OCI-LY7 (cell line): ENCODE measurements at regions of chr1 and their contacts with region 1.

Region 1: GRCh38 chr1:112619520-112620376 is at the start of gene CAPZA1:
- DNase-seq: peak; percentile 92
- H3K4me3 ChIP-seq: peak within 1 kb of the TSS; percentile 86
- H3K27ac ChIP-seq: peak within 1 kb of the TSS; percentile 93
- H3K4me1 ChIP-seq: peaks cover 30% of the 10 kb centered on the region
- CTCF ChIP-seq: no peak
- total RNA-seq, gene CAPZA1: 234 and 274 TPM in 2 replicates

Region 2: GRCh38 chr1:112395821-112396652 is 223.7 kb before region 1 on chr1 and contains the start of gene CTTNBP2NL:
- CTCF ChIA-PET with region 1: no interaction called
- POLR2A ChIA-PET with region 1: interaction called, 5 read pairs
- intact Hi-C with region 1: loop called (anchors 1 kb)
- DNase-seq: peak; percentile 85
- H3K4me3 ChIP-seq: peak within 1 kb of the TSS; percentile 89
- H3K27ac ChIP-seq: no peak within 1 kb of the TSS
- H3K4me1 ChIP-seq: peaks cover 61% of the 10 kb centered on the region
- CTCF ChIP-seq: no peak
- total RNA-seq, gene CTTNBP2NL: 1.5 and 2.1 TPM in 2 replicates

Region 3: GRCh38 chr1:112674439-112674985 is 54.8 kb after region 1 on chr1 and contains the start of gene MOV10:
- CTCF ChIA-PET with region 1: no interaction called
- POLR2A ChIA-PET with region 1: interaction called, 8 read pairs
- intact Hi-C with region 1: loop called (anchors 2 kb)
- DNase-seq: peak; percentile 63
- H3K4me3 ChIP-seq: peak within 1 kb of the TSS; percentile 82
- H3K27ac ChIP-seq: peak within 1 kb of the TSS; percentile 28
- H3K4me1 ChIP-seq: peaks cover 32% of the 10 kb centered on the region
- CTCF ChIP-seq: no peak
- total RNA-seq, gene MOV10: 24.4 and 28.2 TPM in 2 replicates

Region 4: GRCh38 chr1:112688781-112689193 is 69.0 kb after region 1 on chr1:
- CTCF ChIA-PET with region 1: no interaction called
- POLR2A ChIA-PET with region 1: no interaction called
- intact Hi-C with region 1: no loop called
- DNase-seq: no peak
- H3K4me3 ChIP-seq: no peak overlapping the region
- H3K27ac ChIP-seq: no peak overlapping the region
- H3K4me1 ChIP-seq: no peaks in the 10 kb centered on the region
- CTCF ChIP-seq: no peak

Region 5: DNA sequence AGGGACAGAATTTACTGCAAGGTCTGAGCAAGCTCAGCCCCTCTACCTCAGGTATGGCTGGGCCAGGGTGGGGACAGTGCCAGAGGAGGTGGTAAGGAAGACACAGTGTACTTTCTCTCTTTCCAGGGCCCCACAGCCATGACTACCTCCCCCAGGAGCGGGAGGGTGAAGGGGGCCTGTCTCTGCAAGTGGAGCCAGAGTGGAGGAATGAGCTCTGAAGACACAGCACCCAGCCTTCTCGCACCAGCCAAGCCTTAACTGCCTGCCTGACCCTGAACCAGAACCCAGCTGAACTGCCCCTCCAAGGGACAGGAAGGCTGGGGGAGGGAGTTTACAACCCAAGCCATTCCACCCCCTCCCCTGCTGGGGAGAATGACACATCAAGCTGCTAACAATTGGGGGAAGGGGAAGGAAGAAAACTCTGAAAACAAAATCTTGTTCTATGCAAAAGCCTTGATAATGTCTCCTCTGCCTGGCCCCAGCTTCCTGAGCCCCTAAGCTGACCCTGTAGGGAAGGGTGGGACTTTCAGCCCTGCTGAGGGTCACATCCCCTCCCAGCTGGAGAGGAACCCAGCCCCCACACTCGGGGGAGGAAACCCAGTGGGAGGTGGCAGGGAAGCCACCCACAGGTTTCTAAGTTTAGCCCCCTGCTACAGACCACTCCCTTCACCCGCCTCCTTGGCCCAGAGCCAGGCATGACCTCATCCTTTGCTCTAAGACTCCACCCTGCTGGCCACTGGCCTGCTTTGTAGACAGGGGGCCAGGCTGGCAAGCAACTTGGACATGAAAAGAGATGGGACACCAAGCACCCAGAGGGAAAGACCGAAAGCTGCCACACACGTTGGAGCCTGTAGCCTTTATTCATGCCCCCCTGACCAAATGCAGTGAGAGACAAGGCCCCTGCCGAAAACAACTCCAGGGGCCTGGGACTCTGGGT is 80.8 kb after region 1 on chr1:
- CTCF ChIA-PET with region 1: no interaction called
- POLR2A ChIA-PET with region 1: interaction called, 9 read pairs
- intact Hi-C with region 1: loop called (anchors 1 kb)
- DNase-seq: peak; percentile 84
- H3K4me3 ChIP-seq: peak overlapping the region; percentile 40
- H3K27ac ChIP-seq: peak overlapping the region; percentile 54
- H3K4me1 ChIP-seq: peaks cover 55% of the 10 kb centered on the region
- CTCF ChIP-seq: no peak

Region 6: GRCh38 chr1:112715264-112716053 is 95.7 kb after region 1 on chr1 and contains the start of gene PPM1J:
- CTCF ChIA-PET with region 1: no interaction called
- POLR2A ChIA-PET with region 1: interaction called, 5 read pairs
- intact Hi-C with region 1: loop called (anchors 2 kb)
- DNase-seq: peak; percentile 94
- H3K4me3 ChIP-seq: peak within 1 kb of the TSS; percentile 78
- H3K27ac ChIP-seq: no peak within 1 kb of the TSS
- H3K4me1 ChIP-seq: peaks cover 20% of the 10 kb centered on the region
- CTCF ChIP-seq: no peak
- total RNA-seq, gene PPM1J: 1.4 and 1.5 TPM in 2 replicates

Region 7: DNA sequence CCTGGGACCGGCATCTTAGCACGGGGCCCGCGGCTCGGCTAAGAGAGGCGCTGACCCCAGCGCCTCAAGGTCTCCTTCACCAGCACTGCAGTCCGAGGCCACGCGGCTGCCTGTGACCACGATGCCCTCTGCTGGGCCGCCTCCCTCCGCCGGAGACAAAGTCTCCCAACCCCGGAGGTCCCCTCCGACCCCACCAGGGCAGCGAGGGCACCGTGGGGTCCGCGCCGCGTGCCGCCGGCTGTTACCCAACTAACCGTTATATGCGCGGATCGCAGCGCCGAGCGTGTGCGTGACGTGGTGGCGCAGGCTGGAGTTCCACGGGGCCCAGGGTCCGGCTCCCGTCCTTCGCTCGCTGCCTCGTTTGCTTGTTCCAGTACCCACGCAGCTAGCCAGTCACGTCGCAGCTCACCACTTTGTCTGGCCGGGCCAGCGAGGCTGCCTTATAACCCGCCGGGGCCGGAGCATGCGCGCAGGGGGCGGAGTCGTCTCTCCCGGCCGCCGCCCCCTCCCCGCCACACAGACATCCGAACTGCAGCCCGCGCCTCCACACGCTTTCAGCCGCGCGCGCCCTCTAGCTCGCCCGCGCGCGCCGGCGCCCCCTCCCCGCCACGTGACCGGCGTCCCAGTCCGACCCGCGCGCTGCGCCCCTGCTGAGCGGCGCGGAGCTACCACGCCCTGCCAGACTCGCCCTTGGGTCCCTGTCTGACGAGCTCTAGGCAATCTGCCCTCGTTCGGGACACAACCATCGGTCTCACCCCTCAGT is 336.2 kb after region 1 on chr1 and contains the start of gene SLC16A1:
- CTCF ChIA-PET with region 1: no interaction called
- POLR2A ChIA-PET with region 1: no interaction called
- intact Hi-C with region 1: loop called (anchors 10 kb)
- DNase-seq: peak; percentile 94
- H3K4me3 ChIP-seq: peak within 1 kb of the TSS; percentile 88
- H3K27ac ChIP-seq: peak within 1 kb of the TSS; percentile 87
- H3K4me1 ChIP-seq: peaks cover 45% of the 10 kb centered on the region
- CTCF ChIP-seq: peak; percentile 35; the same call in 1 of the 2 replicates
- total RNA-seq, gene SLC16A1: 50.9 and 56.1 TPM in 2 replicates